Gastrocnemius medialis (tissue), 4 donors: ENCODE measurements at regions of chr22 and their contacts with region 1.

Region 1: DNA sequence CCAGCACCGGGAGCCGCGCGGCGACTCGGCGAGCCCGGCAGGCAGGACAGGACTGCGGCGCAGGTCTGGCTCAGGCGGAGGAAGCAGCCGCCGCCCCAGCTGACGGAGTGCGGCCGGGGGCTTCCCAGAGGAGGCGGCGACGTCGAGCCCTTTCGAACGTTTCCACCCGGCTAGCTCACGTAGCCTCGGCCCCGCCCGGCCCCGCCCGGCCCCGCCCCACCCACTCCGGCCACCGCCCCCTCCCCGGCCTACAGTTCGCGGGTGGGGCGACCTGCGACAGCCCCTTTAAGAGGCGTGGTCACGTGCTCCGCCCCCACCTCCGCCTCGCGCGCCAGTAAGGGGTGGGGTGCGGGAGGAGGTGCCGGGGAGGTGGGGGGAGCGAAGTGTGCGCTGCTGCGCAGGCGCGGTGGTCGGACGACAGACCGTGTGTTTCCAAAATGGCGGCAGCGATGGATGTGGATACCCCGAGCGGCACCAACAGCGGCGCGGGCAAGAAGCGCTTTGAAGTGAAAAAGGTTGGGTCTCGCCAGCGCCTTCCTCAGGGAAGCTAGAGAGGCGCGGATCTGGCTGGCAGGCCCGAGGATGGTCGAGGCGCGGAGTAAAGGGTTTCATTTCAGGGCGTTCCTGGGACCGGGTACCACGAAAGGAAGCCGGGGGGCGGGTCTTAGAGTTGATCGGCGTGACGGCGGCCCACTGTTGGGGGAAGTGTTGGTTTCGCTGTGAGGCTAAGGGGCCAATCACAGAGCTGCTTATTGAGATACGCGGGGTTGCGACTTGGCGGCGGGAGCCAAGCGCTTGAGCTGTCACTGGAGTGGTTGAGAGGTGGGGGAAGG is at the start of gene RBX1:
- DNase-seq: peak; percentile 98
- ATAC-seq: peak; percentile 94 to 95
- H3K4me3 ChIP-seq: peak within 1 kb of the TSS; percentile 67 to 99 (median 88)
- H3K27ac ChIP-seq: peak within 1 kb of the TSS; percentile 79 to 97 (median 92)
- H3K4me1 ChIP-seq: peaks cover 24 to 30% of the 10 kb centered on the region in 2 donors
- H3K27me3 ChIP-seq: no peaks in the 10 kb centered on the region
- CTCF ChIP-seq: no peak
- POLR2A ChIP-seq: peak; percentile 72 to 77
- total RNA-seq, gene RBX1: 36.1 to 53.0 (median 46.7) TPM

Region 2: DNA sequence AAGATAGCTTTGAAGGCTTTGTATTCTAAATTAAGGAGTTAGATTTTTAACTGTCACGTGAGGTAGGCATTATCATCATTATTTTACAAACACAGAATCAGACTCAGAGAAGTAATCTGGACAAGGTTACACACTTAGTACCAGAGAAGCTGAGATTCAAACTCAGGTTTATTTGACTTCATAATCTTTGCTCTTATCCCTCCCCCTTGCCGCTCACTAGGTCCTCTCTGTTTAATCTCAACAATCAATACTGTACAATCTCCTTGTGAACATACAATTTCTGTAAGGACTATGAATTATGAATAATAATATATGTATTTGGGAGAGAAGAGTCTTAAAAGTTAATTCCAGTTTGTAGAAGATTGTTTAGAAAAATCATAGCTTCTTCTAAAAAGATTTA is 84.1 kb before region 1 on chr22:
- in situ Hi-C with region 1: no loop called
- intact Hi-C with region 1: no loop called
- DNase-seq: no peak
- ATAC-seq: no peak
- H3K4me3 ChIP-seq: no peak overlapping the region
- H3K27ac ChIP-seq: no peak overlapping the region
- H3K4me1 ChIP-seq: no peaks in the 10 kb centered on the region
- H3K27me3 ChIP-seq: no peaks in the 10 kb centered on the region
- CTCF ChIP-seq: no peak
- POLR2A ChIP-seq: no peak

Region 3: DNA sequence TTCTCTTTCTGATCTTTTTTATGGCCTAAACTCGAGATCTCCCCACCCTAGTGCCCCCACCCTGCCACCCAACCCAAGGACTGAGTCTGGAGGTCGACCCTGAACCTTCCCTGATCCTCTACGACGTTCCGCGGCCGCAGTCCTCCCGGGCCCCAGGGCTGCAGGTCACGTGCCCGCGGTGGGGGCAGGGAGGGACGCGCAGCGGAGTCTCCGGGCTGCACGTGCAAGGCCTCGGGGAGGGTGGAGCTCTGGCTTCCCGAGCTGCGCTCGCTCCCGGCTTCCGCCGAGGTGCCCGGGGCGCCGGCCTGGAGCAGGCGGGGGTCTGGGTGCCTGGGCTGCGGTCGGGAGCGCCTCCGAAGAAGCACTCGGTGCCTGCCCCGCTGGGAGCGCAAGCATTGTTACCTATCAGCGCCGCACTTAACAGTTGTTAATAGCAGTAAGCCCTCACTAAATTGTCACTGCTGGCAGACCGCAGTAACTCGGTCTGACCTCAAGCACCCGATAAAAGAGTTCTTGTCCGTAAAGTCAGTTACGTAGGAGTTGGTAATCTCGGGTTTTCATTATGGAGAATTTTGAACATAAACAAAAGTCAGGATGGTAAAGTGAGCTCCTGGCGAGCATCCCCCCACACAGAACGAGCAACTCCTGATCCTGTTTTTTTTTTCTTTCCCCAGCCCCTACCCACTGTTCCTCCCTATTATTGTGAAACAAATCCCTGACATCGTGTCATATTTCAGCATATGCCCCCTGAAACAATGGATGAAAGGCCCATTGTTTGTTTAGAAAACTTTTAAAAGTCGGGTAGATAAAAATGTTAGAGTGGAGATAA is 71.5 kb after region 1 on chr22:
- in situ Hi-C with region 1: loop called in 1 of 4 experiments (anchors 5 kb)
- intact Hi-C with region 1: loop called (anchors 1 kb)
- DNase-seq: peak; percentile 92 to 94
- ATAC-seq: peak; percentile 87 to 90
- H3K4me3 ChIP-seq: peak overlapping the region; percentile 71 to 85 (median 81)
- H3K27ac ChIP-seq: peak overlapping the region; percentile 89 to 99 (median 94)
- H3K4me1 ChIP-seq: peaks cover 5% of the 10 kb centered on the region in 2 donors
- H3K27me3 ChIP-seq: no peaks in the 10 kb centered on the region
- CTCF ChIP-seq: peak in 2 of 5 experiments; percentile 3 to 6
- POLR2A ChIP-seq: peak; percentile 84 to 88

Region 4: DNA sequence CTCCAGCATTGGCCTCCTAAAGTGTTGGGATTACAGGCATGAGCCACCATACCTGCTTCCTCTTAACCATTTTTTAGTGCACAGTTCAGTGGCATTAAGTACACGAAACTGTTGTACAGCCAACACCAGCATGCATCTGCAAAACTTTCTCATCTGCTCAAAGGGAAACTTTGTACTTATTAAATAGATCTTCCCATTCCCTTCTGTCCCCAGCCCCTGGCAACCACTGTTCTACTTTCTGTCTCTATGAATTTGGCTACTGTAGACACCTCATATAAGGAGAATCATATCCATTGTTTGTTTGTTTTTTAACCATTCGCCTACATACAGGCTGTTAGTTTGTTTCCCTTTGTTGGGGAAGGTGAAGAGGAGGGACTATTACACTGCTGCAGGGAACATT is 134.7 kb after region 1 on chr22:
- in situ Hi-C with region 1: loop called in 2 of 4 experiments (anchors 5 to 10 kb)
- intact Hi-C with region 1: loop called (anchors 1 kb)
- DNase-seq: no peak
- ATAC-seq: no peak
- H3K4me3 ChIP-seq: no peak overlapping the region
- H3K27ac ChIP-seq: no peak overlapping the region
- H3K4me1 ChIP-seq: peaks cover 0 to 4% of the 10 kb centered on the region in 2 donors
- H3K27me3 ChIP-seq: no peaks in the 10 kb centered on the region
- CTCF ChIP-seq: no peak
- POLR2A ChIP-seq: no peak

Region 5: DNA sequence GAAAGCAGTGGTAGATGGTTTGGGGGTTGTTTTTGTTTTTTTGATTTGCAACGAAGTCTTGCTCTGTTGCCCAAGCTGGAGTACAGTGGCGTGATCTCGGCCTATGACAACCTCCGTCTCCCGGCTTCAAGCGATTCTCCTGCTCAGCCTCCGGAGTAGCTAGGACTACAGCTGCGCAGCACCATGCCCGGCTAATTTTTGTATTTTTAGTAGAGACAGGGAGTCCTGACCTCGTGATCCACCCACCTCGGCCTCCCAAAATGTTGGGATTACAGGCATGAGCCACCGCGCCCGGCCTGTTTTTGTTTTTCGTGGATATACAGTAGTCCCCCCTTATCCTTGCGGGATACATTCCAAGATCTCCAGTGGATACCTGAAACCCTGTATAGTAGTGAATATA is 147.9 kb after region 1 on chr22:
- in situ Hi-C with region 1: loop called in 1 of 4 experiments (anchors 5 kb)
- intact Hi-C with region 1: no loop called
- DNase-seq: no peak
- ATAC-seq: peak in 1 of 2 donors; percentile 33
- H3K4me3 ChIP-seq: no peak overlapping the region
- H3K27ac ChIP-seq: peak overlapping the region in 3 of 4 donors; percentile 5 to 46 (median 41)
- H3K4me1 ChIP-seq: peaks cover 79 to 96% of the 10 kb centered on the region in 2 donors
- H3K27me3 ChIP-seq: no peaks in the 10 kb centered on the region
- CTCF ChIP-seq: no peak
- POLR2A ChIP-seq: no peak

Region 6: DNA sequence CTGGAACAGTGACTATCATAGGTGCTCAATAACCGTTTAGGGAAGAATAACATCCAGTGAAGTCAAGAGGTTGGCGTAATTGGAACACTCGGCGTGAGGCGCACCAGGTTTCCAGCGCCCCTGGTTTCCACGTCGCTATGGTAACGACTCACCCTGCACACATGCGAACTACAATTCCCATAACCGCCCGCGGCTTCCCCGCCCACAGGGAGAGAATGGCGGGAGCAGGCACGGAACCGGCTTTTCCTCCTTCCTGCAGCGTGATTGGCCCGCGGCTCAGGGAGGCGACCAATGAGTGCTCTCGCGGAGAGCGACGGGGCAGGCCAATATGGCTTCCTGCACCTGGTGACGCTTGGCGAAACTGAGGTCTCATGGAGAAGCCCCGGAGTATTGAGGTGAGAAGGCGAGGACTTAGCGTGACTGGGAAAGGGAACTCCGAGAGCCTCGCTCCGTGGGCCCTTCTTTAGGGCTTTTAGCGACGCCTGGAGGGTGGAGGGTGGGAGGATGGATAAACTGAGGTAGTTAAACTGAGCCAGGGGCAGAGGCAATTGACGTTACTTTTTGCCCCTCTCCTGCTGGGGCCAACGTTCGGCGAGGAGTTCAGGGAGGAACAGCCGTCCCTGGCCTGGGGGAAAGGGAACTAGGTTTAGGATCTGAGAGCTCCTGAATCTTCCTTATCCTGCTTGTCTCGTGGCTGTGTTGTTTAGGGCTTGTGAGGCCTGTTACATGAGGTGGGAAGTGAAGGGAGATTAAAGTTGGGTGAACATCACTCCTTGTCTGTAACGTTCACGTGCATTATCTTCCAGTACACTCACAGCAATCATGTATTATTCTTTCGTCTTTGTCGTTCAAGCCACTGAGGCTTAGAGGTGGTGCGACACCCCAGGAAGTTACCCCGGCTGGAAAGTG is 254.1 kb after region 1 on chr22 and contains the start of gene L3MBTL2:
- in situ Hi-C with region 1: no loop called
- intact Hi-C with region 1: loop called (anchors 1 kb)
- DNase-seq: peak; percentile 95 to 97
- ATAC-seq: peak; percentile 99 to 100
- H3K4me3 ChIP-seq: peak within 1 kb of the TSS; percentile 62 to 97 (median 82)
- H3K27ac ChIP-seq: peak within 1 kb of the TSS; percentile 83 to 93 (median 90)
- H3K4me1 ChIP-seq: peaks cover 6 to 10% of the 10 kb centered on the region in 2 donors
- H3K27me3 ChIP-seq: no peaks in the 10 kb centered on the region
- CTCF ChIP-seq: no peak
- POLR2A ChIP-seq: peak in 1 of 2 donors; percentile 43
- total RNA-seq, gene L3MBTL2: 4.8 to 14.4 (median 12.4) TPM

Region 7: DNA sequence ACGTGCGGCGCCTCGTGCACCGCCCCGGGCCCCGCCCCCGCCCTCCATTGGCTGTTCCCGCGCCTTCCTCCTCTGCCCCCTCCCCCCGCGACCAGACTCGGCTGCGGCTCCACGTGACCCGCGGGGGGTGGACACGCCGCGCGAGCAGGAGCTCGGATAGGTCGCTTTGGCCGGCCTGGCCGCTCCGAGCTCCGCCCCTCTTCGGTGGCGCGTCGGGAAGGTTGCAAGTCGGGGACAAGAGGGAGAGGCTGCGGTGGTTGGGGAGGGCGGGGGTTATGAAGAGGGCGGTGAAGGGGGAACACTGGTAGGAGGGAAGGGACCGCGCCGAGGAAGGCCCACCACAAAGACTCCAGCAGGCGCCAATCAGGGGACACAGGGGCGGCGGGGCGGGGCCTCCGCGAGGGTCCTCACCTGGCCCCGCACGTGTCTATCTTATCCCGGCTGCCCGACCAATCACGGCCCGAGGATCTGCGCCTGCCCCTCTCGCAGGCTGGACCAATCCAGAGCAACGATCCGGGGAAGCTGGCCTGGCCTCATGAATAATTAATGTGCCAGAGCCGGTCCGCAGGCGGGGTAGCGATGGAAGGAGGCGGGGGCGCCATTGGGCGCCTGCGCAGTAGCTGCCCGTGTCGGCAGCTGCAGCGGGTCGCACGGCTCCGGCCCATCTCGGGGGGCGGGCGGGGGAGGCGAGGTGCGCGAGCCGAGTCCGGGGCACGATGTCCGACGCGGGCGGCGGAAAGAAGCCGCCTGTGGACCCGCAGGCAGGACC is 430.3 kb after region 1 on chr22 and contains the start of gene TEF:
- in situ Hi-C with region 1: no loop called
- intact Hi-C with region 1: loop called (anchors 2 kb)
- DNase-seq: peak; percentile 99 to 100
- ATAC-seq: peak; percentile 75
- H3K4me3 ChIP-seq: peak within 1 kb of the TSS; percentile 73 to 94 (median 86)
- H3K27ac ChIP-seq: peak within 1 kb of the TSS; percentile 96 to 100 (median 100)
- H3K4me1 ChIP-seq: peaks cover 23 to 25% of the 10 kb centered on the region in 2 donors
- H3K27me3 ChIP-seq: no peaks in the 10 kb centered on the region
- CTCF ChIP-seq: no peak
- POLR2A ChIP-seq: peak; percentile 82 to 84
- total RNA-seq, gene TEF: 15.6 to 39.8 (median 19.5) TPM

Region 8: DNA sequence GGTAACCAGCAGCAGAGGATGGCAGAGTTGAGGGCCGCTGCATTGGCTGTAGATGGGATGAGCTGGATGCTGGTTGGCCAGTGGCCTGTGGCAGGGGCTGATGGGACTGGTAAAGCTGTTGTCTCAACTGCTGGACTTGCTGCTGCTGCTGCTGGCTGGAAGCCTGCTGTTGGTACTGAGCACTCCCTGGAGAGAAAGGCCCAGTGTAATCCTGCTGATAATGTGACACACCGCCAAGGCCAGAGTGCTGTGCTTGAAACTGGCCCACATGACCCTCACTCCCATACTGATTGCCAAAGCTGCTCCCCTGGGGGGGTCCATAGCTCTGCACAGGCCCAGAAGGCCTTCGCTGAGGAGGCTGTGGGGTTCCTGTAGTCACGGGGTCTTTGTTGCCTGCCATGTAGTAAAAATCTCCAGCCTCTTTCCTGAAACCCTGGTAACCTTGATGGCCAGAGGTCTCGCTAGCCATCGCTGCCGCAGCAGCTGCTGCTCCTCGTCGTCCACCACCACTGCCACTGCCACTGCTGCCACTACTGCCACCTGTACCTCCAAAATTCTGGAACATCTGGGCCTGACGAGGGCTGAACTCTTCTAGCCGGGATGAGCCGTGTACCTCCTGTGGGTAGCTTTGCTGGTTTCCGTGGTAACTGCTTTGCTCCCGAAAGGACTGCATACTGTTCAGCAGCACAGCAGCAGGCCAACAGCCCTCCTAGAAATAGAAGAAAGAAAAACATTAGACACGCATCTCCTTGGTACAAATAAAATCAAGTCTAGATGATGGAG is 1263.6 kb after region 1 on chr22:
- in situ Hi-C with region 1: no loop called
- intact Hi-C with region 1: no loop called
- DNase-seq: no peak
- ATAC-seq: no peak
- H3K4me3 ChIP-seq: no peak overlapping the region
- H3K27ac ChIP-seq: no peak overlapping the region
- H3K4me1 ChIP-seq: no peaks in the 10 kb centered on the region
- H3K27me3 ChIP-seq: no peaks in the 10 kb centered on the region
- CTCF ChIP-seq: no peak
- POLR2A ChIP-seq: no peak